CD8-positive, alpha-beta memory T cell (primary cell): ENCODE measurements at regions of chr1 and their contacts with region 1.

Region 1: GRCh38 chr1:116806245-116806644 is 52.0 kb downstream of the CD2 start:
- DNase-seq: peak in 4 of 5 donors; percentile 28 to 85 (median 54)
- H3K4me3 ChIP-seq: peak overlapping the region; percentile 46
- H3K4me3 Mint-ChIP-seq: peak overlapping the region; percentile 82 to 92 (median 85)
- H3K27ac ChIP-seq: peak overlapping the region; percentile 48
- H3K27ac Mint-ChIP-seq: peak overlapping the region; percentile 94 to 99 (median 96)
- H3K4me1 ChIP-seq: peaks cover 66% of the 10 kb centered on the region
- H3K4me1 Mint-ChIP-seq: peaks cover 82 to 97% (median 95%) of the 10 kb centered on the region in 3 donors
- H3K27me3 ChIP-seq: no peaks in the 10 kb centered on the region
- H3K27me3 Mint-ChIP-seq: no peaks in the 10 kb centered on the region

Region 2: GRCh38 chr1:116448813-116449281 is 357.4 kb before region 1 on chr1:
- CTCF ChIA-PET with region 1: no interaction called
- POLR2A ChIA-PET with region 1: no interaction called
- DNase-seq: no peak
- H3K4me3 ChIP-seq: no peak overlapping the region
- H3K4me3 Mint-ChIP-seq: no peak overlapping the region
- H3K27ac ChIP-seq: no peak overlapping the region
- H3K27ac Mint-ChIP-seq: no peak overlapping the region
- H3K4me1 ChIP-seq: no peaks in the 10 kb centered on the region
- H3K4me1 Mint-ChIP-seq: no peaks in the 10 kb centered on the region
- H3K27me3 ChIP-seq: no peaks in the 10 kb centered on the region
- H3K27me3 Mint-ChIP-seq: peaks cover 6 to 45% of the 10 kb centered on the region in 2 donors

Region 3: DNA sequence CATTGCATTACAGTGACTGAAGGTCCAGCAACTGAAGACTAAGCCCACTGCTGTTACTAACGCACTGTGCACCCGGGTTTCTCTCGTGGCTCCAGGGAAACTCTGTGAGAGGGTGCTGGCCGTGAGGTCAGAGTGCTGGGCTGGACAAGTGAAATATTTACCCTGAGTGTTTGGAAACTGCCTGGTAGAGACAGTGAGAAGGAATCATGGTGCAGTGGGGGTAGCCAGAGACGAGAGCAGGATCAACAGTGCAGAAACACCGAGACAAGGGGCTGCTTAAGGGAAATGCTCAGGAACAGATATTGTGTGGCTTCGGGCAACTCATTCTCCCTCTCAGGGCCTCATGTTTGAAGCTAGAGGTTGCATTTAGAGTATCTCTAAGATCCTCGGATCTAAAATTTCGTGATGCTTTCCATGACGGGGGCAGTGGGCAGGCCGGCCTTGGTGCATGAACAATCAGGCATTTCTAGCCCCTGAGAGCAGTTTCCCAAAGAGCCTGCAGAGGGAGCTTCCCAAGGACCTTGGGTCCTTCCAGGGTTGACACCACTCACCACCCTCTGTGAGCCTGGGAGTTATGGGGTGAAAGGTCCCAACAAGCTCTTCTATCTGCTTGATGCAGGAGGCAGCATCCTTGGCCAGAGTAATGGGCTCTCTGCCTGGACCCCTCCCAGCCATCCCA is 42.3 kb before region 1 on chr1:
- CTCF ChIA-PET with region 1: interaction called, 12 read pairs
- POLR2A ChIA-PET with region 1: interaction called, 233 read pairs
- DNase-seq: peak in 3 of 5 donors; percentile 31 to 65 (median 39)
- H3K4me3 ChIP-seq: peak overlapping the region; percentile 64
- H3K4me3 Mint-ChIP-seq: peak overlapping the region; percentile 80 to 97 (median 89)
- H3K27ac ChIP-seq: peak overlapping the region; percentile 73
- H3K27ac Mint-ChIP-seq: peak overlapping the region; percentile 98 to 100 (median 98)
- H3K4me1 ChIP-seq: peaks cover 99% of the 10 kb centered on the region
- H3K4me1 Mint-ChIP-seq: peaks cover 94 to 100% (median 99%) of the 10 kb centered on the region in 3 donors
- H3K27me3 ChIP-seq: no peaks in the 10 kb centered on the region
- H3K27me3 Mint-ChIP-seq: peaks cover 0 to 1% of the 10 kb centered on the region in 2 donors

Region 4: GRCh38 chr1:116769561-116769977 is 36.7 kb before region 1 on chr1:
- CTCF ChIA-PET with region 1: interaction called, 12 read pairs
- POLR2A ChIA-PET with region 1: interaction called, 233 read pairs
- DNase-seq: peak; percentile 56 to 89 (median 88)
- H3K4me3 ChIP-seq: peak overlapping the region; percentile 41
- H3K4me3 Mint-ChIP-seq: peak overlapping the region; percentile 34 to 97 (median 82)
- H3K27ac ChIP-seq: peak overlapping the region; percentile 40
- H3K27ac Mint-ChIP-seq: peak overlapping the region; percentile 98 to 100 (median 98)
- H3K4me1 ChIP-seq: peaks cover 87% of the 10 kb centered on the region
- H3K4me1 Mint-ChIP-seq: peaks cover 88 to 92% (median 91%) of the 10 kb centered on the region in 3 donors
- H3K27me3 ChIP-seq: no peaks in the 10 kb centered on the region
- H3K27me3 Mint-ChIP-seq: no peaks in the 10 kb centered on the region

Region 5: DNA sequence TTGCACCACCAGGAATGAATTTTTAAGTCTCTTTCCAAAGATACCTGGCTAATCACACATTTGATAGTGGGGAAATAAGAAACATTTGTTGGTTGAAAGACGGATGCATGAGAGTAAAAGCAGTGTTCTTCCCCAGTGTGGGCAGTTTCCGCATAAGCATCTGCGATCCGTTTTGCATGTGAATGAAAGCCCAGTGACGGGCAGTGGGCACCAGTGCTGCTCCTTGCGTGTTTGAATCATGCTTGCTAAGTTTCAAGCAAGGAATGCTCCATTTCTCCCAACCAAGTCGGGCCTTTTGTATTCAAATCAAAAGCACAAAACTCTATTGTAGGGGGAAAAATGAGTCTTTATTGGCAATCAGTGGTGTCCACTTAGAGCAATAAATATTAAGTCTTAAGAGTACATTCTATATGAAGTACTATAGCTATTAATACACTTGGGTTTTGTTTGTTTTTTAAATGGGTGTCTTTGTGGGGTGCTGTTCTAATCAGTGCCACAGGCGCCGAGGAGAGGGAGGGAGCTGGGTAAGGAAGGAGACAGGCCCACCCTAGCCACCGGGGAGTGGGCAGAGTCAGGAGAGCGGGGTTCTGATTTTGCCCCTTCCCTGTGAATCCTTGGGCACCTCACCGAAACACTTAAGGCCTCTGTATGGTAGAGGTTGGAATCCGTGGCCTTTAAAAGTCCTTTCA is 102.7 kb after region 1 on chr1:
- CTCF ChIA-PET with region 1: no interaction called
- POLR2A ChIA-PET with region 1: no interaction called
- DNase-seq: no peak
- H3K4me3 ChIP-seq: no peak overlapping the region
- H3K4me3 Mint-ChIP-seq: peak overlapping the region; percentile 72 to 87 (median 79)
- H3K27ac ChIP-seq: no peak overlapping the region
- H3K27ac Mint-ChIP-seq: peak overlapping the region in 3 of 8 donors; percentile 30 to 58 (median 35)
- H3K4me1 ChIP-seq: no peaks in the 10 kb centered on the region
- H3K4me1 Mint-ChIP-seq: peaks cover 1 to 5% (median 4%) of the 10 kb centered on the region in 3 donors
- H3K27me3 ChIP-seq: no peaks in the 10 kb centered on the region
- H3K27me3 Mint-ChIP-seq: peaks cover 2 to 10% of the 10 kb centered on the region in 2 donors

Region 6: GRCh38 chr1:117121776-117122697 is 315.8 kb after region 1 on chr1:
- CTCF ChIA-PET with region 1: no interaction called
- POLR2A ChIA-PET with region 1: no interaction called
- DNase-seq: peak; percentile 65 to 79 (median 71)
- H3K4me3 ChIP-seq: peak overlapping the region; percentile 60
- H3K4me3 Mint-ChIP-seq: peak overlapping the region; percentile 83 to 91 (median 88)
- H3K27ac ChIP-seq: peak overlapping the region; percentile 25
- H3K27ac Mint-ChIP-seq: peak overlapping the region in 4 of 8 donors; percentile 64 to 89 (median 78)
- H3K4me1 ChIP-seq: peaks cover 7% of the 10 kb centered on the region
- H3K4me1 Mint-ChIP-seq: peaks cover 5 to 13% (median 13%) of the 10 kb centered on the region in 3 donors
- H3K27me3 ChIP-seq: no peaks in the 10 kb centered on the region
- H3K27me3 Mint-ChIP-seq: peaks cover 5% of the 10 kb centered on the region in 2 donors